ENCODE measurements at regions of chr3 and their contacts with region 1.

Region 1: GRCh38 chr3:126870608-126871210 is 112.2 kb upstream of the PLXNA1 start:
- DNase-seq: no peak

Region 2: GRCh38 chr3:125374996-125375941 is 1495.4 kb before region 1 on chr3 and contains the start of gene ZNF148:
- intact Hi-C with region 1: loop called in 1 of 2 experiments (anchors 10 kb)
- DNase-seq: peak; percentile 98
- total RNA-seq, gene ZNF148: 39.7 to 45.5 TPM

Region 3: DNA sequence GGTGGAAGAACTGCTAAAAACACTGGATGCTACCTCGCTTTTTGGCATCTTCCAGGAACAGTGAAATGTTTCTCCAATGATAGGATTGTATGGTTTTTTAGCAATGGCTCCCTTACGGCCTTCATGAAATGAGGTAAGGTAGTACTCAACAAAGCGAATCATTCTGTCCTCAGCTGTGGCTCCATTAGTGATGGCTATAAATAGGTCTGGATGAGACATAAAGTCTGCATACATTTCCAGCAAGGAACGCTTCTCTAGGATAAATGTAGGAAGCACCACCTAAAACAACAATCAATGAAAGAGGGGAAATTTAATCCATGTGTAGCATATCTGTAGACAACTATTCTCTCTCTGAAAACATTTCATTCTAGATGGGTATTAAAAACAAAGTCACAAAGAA is 1318.3 kb before region 1 on chr3:
- intact Hi-C with region 1: loop called in 1 of 2 experiments (anchors 5 kb)
- DNase-seq: no peak

Region 4: DNA sequence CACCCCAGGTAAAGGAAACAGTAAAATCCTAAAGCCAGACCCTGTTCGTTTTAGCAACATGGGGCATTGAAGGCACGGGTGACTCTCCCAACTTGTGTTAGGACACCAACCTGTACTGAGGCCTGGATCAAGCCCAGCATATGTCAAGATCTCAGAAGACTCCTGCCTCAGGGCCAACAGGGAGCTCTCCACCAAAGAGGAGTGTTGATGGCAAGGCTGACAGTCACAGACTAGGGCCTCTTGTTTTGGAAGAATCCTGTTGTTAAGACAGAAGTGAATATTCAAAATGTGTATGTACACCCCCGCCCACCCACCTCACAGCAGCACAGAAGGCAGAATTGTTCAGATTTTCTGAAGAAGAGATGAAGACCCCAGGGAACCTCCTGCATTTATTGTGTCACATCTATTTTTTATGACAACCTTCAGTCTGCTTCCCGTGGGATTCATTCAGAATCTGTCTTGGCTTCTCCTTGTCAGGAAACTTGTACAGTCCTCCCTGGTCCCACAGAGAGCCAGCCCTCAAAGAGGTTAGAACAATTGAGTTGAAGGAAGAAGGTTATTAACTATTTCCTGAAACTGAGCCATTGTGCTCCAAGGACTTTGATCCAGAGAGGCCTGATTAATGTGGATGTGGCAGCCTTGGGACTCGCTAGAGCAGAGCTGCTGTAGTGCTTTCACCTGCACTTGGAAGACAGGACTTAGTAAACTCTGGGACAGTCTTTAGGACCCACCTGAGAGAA is 50.5 kb after region 1 on chr3:
- intact Hi-C with region 1: no loop called
- DNase-seq: peak; percentile 24

Region 5: DNA sequence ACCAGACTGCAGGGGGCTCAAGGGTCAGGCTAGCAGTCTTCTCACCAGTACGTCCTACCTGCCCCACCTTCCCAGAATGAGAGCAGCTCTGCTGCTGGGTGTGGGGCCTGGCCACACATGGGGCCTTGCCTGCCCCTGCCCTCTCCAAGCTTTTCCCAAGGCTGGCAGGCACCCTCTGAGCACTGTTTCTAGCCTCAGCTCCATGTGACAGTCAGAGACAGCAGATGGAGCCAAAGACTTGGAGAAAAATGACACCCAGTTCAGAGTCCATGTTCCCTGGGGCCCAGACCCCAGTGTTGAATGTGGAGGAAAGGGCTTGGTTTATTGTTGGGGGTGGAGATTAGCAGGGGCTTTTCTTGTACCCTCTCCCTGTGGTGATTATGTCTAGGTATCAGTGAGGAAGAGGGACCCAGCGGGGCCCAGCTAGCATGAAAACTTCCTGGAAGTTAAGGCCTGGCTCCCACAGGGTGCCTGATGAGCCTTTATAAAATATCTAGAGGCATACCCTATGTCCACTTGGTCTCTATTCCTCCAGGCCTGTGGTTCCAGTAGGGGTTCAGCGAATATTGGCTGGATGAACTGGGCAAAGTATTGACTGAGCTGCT is 1436.4 kb after region 1 on chr3:
- intact Hi-C with region 1: no loop called
- DNase-seq: no peak